HCT116 (cell line): ENCODE measurements at regions of chr14 and their contacts with region 1.

Region 1: DNA sequence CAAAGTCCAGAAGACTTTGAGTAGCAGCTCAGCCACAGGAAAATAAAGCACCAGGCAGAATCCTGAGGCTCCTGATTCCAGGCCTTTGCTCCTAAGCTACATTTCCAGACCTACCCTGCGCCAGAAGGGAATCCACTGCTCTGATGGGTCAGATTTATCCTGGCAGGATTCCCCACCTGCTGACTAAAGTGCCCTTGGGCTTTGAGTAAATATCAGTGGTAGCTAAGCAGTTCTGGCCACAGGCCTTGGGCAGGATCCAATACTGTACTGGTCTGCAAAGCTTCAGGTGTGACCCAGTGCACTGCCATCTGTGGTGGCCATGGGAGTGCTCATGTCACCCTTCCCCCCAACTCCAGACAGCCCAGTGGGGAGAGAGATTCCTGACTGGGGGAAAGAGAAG is 10.4 kb upstream of the ACOT1 start:
- DNase-seq: no peak
- ATAC-seq: no peak
- H3K4me3 ChIP-seq: no peak overlapping the region
- H3K27ac ChIP-seq: no peak overlapping the region
- H3K4me1 ChIP-seq: peaks cover 4 to 6% of the 10 kb centered on the region in 2 experiments; a peak in 3 of 4 replicates
- H3K27me3 ChIP-seq: no peaks in the 10 kb centered on the region
- CTCF ChIP-seq: no peak
- POLR2A ChIP-seq: no peak
- RAD21 ChIP-seq: no peak

Region 2: GRCh38 chr14:72270147-72270731 is 1256.3 kb before region 1 on chr14:
- CTCF ChIA-PET with region 1: no interaction called
- POLR2A ChIA-PET with region 1: no interaction called
- RAD21 ChIA-PET with region 1: no interaction called
- intact Hi-C with region 1: no loop called
- DNase-seq: no peak
- ATAC-seq: no peak
- H3K4me3 ChIP-seq: no peak overlapping the region
- H3K27ac ChIP-seq: no peak overlapping the region
- H3K4me1 ChIP-seq: no peaks in the 10 kb centered on the region
- H3K27me3 ChIP-seq: no peaks in the 10 kb centered on the region
- CTCF ChIP-seq: no peak
- POLR2A ChIP-seq: no peak
- RAD21 ChIP-seq: no peak

Region 3: DNA sequence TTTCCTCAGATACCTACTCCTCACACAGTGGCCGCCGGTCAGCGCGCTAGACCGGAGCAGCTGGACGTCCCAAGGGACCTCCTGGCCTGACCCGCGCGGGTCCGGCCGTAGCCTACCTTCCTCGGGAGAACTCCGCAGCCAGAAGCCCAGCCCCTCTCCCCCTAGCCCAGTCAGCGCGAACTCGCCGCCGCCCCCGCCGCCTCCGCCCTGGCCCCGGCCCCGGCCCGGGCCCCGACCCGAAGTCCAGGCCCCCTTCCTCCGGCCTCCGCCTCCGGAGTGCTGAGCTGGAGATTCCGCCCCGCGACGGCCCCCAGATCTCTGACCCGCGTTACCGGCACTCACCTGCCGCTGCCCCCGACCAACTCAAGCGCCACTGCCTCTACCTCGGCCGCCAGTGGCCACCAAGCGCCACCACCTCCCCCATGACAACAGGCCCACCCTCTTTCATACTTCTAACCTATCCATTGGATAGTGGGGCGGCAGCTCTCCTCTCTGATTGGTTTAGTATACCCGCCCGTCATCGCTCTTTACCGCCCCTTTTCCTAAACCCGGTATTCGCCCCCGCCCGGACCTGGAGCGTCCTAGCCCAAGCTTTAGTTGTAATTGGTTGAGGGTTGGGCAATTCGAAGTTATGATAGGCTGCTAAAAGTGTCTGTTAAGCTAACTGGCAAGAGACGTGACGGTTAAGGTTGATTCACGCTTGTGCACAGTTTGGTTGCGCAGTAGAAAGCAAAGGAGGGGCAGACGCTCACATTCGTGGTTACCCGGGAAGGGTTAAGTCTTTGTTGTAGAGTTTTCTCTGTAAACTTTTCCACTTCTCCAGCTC is 68.2 kb before region 1 on chr14 and contains the start of gene NUMB:
- CTCF ChIA-PET with region 1: no interaction called
- POLR2A ChIA-PET with region 1: no interaction called
- RAD21 ChIA-PET with region 1: no interaction called
- intact Hi-C with region 1: no loop called
- DNase-seq: peak; percentile 100
- ATAC-seq: peak; percentile 96
- H3K4me3 ChIP-seq: peak within 1 kb of the TSS; percentile 88 to 90
- H3K27ac ChIP-seq: peak within 1 kb of the TSS; percentile 62
- H3K4me1 ChIP-seq: peaks cover 6 to 19% of the 10 kb centered on the region in 2 experiments; a peak in 3 of 4 replicates
- H3K27me3 ChIP-seq: no peaks in the 10 kb centered on the region
- CTCF ChIP-seq: no peak
- POLR2A ChIP-seq: peak; percentile 85
- RAD21 ChIP-seq: no peak
- total RNA-seq, gene NUMB: 43.0 TPM

Region 4: DNA sequence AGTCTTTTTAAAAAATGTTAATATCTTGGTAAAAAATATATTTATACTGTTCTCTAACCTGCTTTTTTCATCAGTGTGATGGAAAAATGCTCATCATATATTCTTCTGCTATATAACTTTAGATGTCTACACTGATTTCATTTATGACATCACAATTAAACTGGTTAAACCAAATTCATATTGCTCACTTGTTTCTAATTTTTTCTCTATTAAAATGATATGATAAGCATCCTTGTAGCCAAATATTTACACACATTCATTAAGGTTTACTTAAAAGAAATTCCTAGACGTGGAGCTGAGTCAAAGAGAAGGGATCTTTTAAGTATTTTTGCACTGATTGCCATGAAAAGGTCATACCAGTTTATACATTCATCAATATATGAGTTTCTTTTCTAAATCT is 38.3 kb after region 1 on chr14:
- CTCF ChIA-PET with region 1: no interaction called
- POLR2A ChIA-PET with region 1: no interaction called
- RAD21 ChIA-PET with region 1: no interaction called
- intact Hi-C with region 1: loop called (anchors 5 kb)
- DNase-seq: no peak
- ATAC-seq: no peak
- H3K4me3 ChIP-seq: no peak overlapping the region
- H3K27ac ChIP-seq: no peak overlapping the region
- H3K4me1 ChIP-seq: no peaks in the 10 kb centered on the region
- H3K27me3 ChIP-seq: no peaks in the 10 kb centered on the region
- CTCF ChIP-seq: no peak
- POLR2A ChIP-seq: no peak
- RAD21 ChIP-seq: no peak